Pancreas (tissue), 10 donors: ENCODE measurements at regions of chr6 and their contacts with region 1.

Region 1: GRCh38 chr6:26322645-26323482 is 42.1 kb upstream of the BTN3A2 start:
- DNase-seq: peak in 1 of 6 donors; percentile 46
- ATAC-seq: peak; percentile 81 to 87 (median 85)
- H3K4me3 ChIP-seq: peak overlapping the region in 2 of 4 donors; percentile 28 to 43
- H3K27ac ChIP-seq: no peak overlapping the region
- H3K4me1 ChIP-seq: no peaks in the 10 kb centered on the region
- H3K27me3 ChIP-seq: peaks cover 0 to 52% (median 5%) of the 10 kb centered on the region in 4 donors
- CTCF ChIP-seq: no peak

Region 2: DNA sequence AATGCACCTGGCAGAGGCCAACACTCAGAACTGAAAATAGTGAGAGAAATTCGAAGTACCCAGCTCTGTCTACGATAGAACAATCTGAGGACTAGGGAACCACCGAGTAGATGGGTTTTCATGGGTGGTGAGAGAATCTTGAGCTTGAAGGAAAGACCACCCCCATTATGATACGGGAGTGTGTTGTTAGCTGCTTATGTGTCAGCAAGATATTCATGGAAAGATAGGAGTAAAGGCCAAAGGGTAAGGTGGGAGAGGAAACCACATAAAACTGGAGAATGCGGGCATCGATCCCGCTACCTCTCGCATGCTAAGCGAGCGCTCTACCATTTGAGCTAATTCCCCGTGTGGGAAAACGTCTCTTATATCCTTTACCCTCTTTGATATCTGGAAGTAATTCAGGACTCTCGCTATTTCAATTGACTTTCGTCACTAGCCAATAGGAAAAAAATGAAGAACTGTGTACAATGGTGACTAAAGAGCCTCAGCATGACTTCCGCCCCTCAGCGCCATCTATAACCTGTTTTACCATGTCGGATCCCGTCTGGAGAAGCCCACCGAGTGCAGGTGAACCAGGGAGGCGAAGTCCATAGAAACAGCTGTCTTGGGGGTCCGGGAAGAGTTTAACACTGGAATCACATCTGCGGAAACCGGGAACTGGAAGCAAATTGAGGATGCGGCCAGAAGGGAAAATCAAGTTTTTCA is 248.9 kb after region 1 on chr6:
- intact Hi-C with region 1: loop called in 1 of 3 experiments (anchors 10 kb)
- DNase-seq: peak in 4 of 6 donors; percentile 37 to 80 (median 60)
- ATAC-seq: peak; percentile 75 to 83 (median 82)
- H3K4me3 ChIP-seq: peak overlapping the region; percentile 24 to 47 (median 30)
- H3K27ac ChIP-seq: peak overlapping the region in 3 of 4 donors; percentile 22 to 76 (median 72)
- H3K4me1 ChIP-seq: peaks cover 0 to 6% (median 0%) of the 10 kb centered on the region in 3 donors
- H3K27me3 ChIP-seq: no peaks in the 10 kb centered on the region
- CTCF ChIP-seq: no peak